Left ventricle myocardium superior (tissue), 1 donor: ENCODE measurements at regions of chr2 and their contacts with region 1.

Region 1: DNA sequence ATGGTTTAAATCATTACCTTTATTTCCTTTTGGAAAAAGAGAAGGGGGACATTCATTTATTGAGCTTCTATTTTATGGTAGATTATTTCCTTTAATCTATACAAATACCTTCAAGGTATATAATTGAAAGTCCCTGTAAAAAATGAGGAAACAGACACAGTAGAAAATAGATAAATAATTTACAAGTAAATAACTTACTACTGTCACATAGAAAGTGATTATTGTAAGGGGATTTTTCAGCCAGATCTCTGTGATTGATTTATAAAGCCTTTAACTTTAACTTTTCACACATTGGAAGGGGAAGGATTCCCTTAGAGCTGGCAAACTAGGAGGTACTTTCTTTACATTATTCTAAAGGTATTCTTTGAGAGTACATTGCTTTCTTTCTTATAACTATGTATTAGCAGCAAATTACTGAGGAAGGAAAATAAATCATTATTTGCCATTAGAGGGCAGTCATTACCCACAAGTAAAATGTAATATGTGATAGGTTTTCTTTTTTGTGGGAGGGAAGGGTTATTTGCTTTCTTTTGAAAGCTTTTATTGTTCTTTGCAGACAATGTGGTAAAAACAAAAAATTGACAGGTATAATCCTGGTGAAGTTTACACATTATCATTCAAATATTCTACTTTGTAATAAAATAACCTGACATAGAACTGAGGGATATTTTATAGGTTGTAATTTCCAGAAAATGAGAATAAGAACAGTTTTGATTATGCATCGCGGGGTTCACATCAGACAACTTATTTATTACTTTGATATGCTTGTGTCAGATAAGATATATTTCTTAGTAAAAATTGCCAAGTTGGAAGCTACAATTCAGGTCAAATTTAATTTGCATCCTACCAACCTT is 24.8 kb upstream of the RPE start:
- DNase-seq: no peak
- ATAC-seq: no peak

Region 2: DNA sequence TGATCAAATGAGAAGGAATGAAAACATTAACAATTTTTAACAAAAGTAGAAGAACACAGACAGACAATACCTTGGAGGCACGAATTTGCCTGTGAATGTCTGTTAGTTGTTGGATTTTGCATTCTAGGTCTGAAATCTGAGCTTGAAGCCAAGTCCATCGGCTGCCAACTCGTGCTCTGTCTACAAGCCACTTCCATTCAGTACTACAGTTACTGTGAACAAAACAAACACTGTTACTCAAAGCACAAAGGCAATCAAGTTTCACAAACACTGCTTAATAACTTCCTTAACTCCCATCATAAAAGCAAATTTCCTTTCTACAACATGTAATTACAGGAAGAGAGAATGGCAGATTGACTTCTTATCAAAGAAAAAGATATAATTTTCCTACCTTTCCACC is 151.3 kb after region 1 on chr2:
- intact Hi-C with region 1: no loop called
- DNase-seq: peak; percentile 35
- ATAC-seq: peak; percentile 32

Region 3: DNA sequence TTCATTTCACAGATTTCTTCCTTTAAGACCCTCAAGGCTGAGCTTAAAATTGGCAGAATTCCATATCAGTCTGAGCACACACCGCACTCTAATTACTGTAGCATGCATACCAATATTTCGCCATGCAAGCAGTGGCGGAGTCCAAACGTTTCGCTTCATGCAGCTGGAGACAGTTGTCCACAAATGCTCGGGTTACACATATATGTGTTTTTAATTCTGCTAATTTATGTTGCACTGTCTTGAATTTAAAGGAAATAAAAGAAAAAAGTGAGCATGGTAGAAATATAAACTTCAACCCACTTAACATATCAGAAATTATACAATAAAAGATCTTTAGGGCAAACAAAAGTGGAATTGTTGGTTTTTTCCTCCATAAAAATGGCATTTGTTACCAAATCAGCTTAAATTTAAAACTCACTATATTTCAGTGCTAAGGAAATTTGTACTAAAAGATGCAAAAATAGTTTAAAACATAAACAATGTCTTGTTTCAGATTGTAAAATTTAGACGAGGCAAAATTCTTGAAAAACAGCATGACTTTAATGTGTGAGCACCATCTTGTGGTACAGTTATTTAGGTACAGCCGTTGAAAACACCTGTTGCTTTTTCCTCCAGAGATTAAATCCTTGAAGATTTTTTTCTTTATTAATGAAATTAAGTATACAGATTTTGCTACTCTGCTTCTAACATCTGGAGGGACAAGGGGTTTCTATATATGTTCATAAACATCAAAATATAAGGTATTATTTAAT is 217.7 kb after region 1 on chr2:
- intact Hi-C with region 1: loop called (anchors 2 kb)
- DNase-seq: peak; percentile 16
- ATAC-seq: peak; percentile 44